Right cardiac atrium (tissue), 5 donors: ENCODE measurements at regions of chr3 and their contacts with region 1.

Region 1: DNA sequence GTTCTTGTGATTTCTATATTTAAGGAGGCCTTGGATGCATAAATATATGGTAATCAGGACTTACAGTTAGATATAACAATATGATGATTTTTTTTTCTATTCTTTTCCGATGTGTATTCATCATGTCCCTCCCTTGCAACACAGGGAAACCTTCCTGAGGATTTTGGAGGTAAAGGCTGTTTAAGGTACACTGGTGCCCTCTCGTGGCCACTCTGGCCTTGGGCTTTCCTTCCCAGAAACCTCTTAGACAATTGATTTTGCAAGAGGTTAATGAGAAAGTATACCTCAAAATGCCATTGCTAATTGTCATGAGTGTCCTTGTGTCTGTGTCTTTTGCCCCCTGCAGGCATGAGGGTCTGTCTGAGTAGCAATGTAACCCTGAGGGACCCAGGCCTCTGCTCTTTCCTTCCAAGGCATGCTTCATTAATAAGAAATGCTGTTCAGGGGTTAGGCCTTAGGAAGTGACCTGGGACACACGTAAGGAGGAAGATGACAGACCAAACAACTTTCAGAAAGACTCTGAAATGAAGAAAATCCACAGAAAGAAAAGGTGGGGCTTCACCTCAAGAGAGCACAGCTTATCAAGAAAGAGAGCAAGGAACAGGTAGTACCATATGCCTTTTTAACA is 70.3 kb upstream of the PPP2R3A start:
- DNase-seq: peak; percentile 67 to 89 (median 81)
- ATAC-seq: peak; percentile 33 to 63
- H3K4me3 ChIP-seq: no peak overlapping the region
- H3K27ac ChIP-seq: no peak overlapping the region
- H3K4me1 ChIP-seq: no peaks in the 10 kb centered on the region
- H3K27me3 ChIP-seq: no peaks in the 10 kb centered on the region

Region 2: GRCh38 chr3:134600685-134601463 is 1294.3 kb before region 1 on chr3:
- intact Hi-C with region 1: loop called (anchors 5 to 10 kb)
- DNase-seq: peak; percentile 57 to 85 (median 82)
- ATAC-seq: peak; percentile 76
- H3K4me3 ChIP-seq: no peak overlapping the region
- H3K27ac ChIP-seq: no peak overlapping the region
- H3K4me1 ChIP-seq: no peaks in the 10 kb centered on the region
- H3K27me3 ChIP-seq: no peaks in the 10 kb centered on the region

Region 3: GRCh38 chr3:134794950-134795745 is 1100.1 kb before region 1 on chr3 and contains the start of gene EPHB1:
- intact Hi-C with region 1: loop called (anchors 5 to 10 kb)
- DNase-seq: peak; percentile 78 to 89 (median 88)
- ATAC-seq: peak; percentile 92 to 94
- H3K4me3 ChIP-seq: peak within 1 kb of the TSS; percentile 15
- H3K27ac ChIP-seq: no peak within 1 kb of the TSS
- H3K4me1 ChIP-seq: no peaks in the 10 kb centered on the region
- H3K27me3 ChIP-seq: no peaks in the 10 kb centered on the region
- total RNA-seq, gene EPHB1: 0.97 to 1.6 (median 1.3) TPM

Region 4: DNA sequence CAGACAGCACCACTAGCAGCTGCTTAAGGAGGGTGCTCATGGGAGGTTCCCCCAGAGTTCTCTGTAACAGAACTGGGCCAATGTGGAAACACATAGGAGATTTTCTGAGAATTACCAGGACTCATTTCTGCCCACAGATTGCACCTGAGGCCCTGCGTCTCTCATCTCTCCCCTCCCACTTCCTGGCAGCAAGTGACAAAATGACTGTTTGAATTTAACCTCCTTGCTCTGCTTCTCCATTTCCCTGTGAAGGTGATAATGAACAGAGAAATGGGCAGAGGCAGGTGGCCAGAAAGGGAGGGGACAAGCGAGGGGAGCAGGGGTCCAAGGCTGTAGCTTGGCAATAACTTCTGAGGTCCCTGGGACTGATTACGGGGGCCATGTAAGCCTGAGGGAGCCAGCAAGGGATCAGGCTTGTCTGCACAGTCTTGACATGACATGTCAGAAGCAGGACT is 1092.1 kb before region 1 on chr3:
- intact Hi-C with region 1: loop called in 3 of 4 experiments (anchors 5 to 10 kb)
- DNase-seq: no peak
- ATAC-seq: no peak
- H3K4me3 ChIP-seq: no peak overlapping the region
- H3K27ac ChIP-seq: no peak overlapping the region
- H3K4me1 ChIP-seq: no peaks in the 10 kb centered on the region
- H3K27me3 ChIP-seq: no peaks in the 10 kb centered on the region

Region 5: GRCh38 chr3:135503760-135504686 is 391.2 kb before region 1 on chr3:
- intact Hi-C with region 1: loop called in 1 of 4 experiments (anchors 10 kb)
- DNase-seq: peak; percentile 44 to 86 (median 81)
- ATAC-seq: peak; percentile 71 to 82
- H3K4me3 ChIP-seq: no peak overlapping the region
- H3K27ac ChIP-seq: no peak overlapping the region
- H3K4me1 ChIP-seq: no peaks in the 10 kb centered on the region
- H3K27me3 ChIP-seq: no peaks in the 10 kb centered on the region

Region 6: DNA sequence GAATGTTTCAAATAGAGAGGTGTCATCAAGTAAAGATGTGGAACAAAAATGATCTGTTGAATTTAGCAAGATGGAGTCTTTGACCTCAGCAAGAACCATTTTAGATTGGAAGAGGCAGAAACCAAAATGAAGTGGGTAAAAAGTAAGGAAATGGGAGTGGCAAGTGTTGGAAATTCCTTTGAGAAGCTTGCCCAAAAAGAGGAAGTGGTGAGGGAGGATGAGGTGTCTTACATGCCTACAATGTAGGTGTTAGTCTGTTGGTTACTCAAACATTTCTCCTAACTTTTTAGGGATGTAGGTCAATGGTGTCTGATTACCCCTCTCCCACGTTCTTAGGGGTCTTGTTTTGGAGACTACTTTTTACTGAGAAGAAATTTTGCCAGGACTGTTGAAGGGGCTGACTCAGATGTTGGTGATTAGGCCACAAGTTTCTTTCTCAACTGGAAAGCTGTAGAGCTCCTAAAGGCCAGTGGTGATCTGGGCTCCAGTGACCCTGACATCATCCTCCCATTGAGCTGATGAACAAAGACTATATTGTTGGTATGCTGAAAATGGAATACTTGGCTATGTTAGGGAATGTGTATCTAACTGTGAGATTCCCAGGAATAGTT is 75.4 kb after region 1 on chr3:
- intact Hi-C with region 1: no loop called
- DNase-seq: no peak
- ATAC-seq: no peak
- H3K4me3 ChIP-seq: no peak overlapping the region
- H3K27ac ChIP-seq: no peak overlapping the region
- H3K4me1 ChIP-seq: peaks cover 1% of the 10 kb centered on the region
- H3K27me3 ChIP-seq: no peaks in the 10 kb centered on the region